ENCODE measurements at regions of chr11 and their contacts with region 1.

Region 1: DNA sequence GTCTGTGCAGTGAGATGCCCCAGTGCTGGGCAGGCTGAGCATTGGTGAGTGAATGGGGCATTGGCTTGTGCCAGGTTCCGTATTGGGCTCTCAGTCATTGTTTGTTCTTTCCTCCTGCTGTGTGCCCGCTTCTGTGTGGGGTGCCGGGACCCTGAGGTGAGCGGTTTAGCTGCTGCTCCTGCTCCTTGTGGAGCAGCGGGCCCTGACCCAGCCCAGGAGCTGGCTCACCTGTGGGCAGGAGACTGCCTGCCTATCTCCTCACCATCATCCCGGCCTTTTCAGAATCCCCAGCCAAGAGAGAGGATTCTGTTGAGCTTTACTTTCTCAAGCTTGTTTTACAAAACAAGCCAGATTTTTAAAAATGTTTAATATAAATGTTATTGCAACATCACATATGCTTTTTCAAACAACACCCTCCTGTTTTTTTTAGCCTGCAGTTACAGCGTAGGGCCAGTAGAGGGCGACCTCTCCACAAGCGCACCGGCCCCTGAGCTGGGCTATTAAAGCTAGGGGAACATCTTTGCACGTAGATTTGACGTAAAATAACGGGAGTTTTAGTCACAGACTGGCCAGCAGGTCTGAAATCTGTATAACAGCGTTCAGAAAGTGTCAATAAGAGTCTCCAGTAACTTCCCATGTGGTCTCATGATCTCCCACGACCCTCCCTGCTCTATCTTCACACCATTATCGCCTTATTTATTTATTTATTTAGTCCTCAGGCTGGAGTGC is 25.1 kb upstream of the RELT start:
- DNase-seq: peak in 2 of 5 donors; percentile 54 to 55
- ATAC-seq: peak; percentile 27 to 52 (median 37)
- H3K4me3 ChIP-seq: no peak overlapping the region
- H3K27ac ChIP-seq: peak overlapping the region in 1 of 12 donors; percentile 49
- H3K4me1 ChIP-seq: peaks cover 0 to 21% (median 3%) of the 10 kb centered on the region in 12 donors
- H3K27me3 ChIP-seq: no peaks in the 10 kb centered on the region
- CTCF ChIP-seq: peak in 11 of 12 donors; percentile 95 to 99 (median 98)
- POLR2A ChIP-seq: no peak

Region 2: GRCh38 chr11:73372371-73372993 is 21.4 kb after region 1 on chr11:
- intact Hi-C with region 1: no loop called
- DNase-seq: peak in 3 of 5 donors; percentile 42 to 62 (median 54)
- ATAC-seq: peak; percentile 11 to 16 (median 12)
- H3K4me3 ChIP-seq: no peak overlapping the region
- H3K27ac ChIP-seq: peak overlapping the region in 10 of 12 donors; percentile 4 to 68 (median 42)
- H3K4me1 ChIP-seq: peaks cover 0 to 28% (median 19%) of the 10 kb centered on the region in 12 donors
- H3K27me3 ChIP-seq: no peaks in the 10 kb centered on the region
- CTCF ChIP-seq: peak in 5 of 12 donors; percentile 17 to 34 (median 32)
- POLR2A ChIP-seq: no peak

Region 3: GRCh38 chr11:73393479-73394380 is 42.7 kb after region 1 on chr11:
- intact Hi-C with region 1: loop called (anchors 1 to 5 kb)
- DNase-seq: peak; percentile 71 to 87 (median 79)
- ATAC-seq: peak; percentile 58 to 79 (median 70)
- H3K4me3 ChIP-seq: no peak overlapping the region
- H3K27ac ChIP-seq: peak overlapping the region in 1 of 12 donors; percentile 13
- H3K4me1 ChIP-seq: peaks cover 0 to 37% (median 13%) of the 10 kb centered on the region in 12 donors
- H3K27me3 ChIP-seq: no peaks in the 10 kb centered on the region
- CTCF ChIP-seq: peak; percentile 58 to 83 (median 78)
- POLR2A ChIP-seq: no peak

Measured in heart left ventricle (tissue), 16 donors.